BJ (cell line): ENCODE measurements at regions of chr12 and their contacts with region 1.

Region 1: GRCh38 chr12:52980693-52981423 is 25.4 kb upstream of the EIF4B start:
- DNase-seq: peak; percentile 51
- H3K4me3 ChIP-seq: no peak overlapping the region
- H3K27me3 ChIP-seq: no peaks in the 10 kb centered on the region
- CTCF ChIP-seq: peak; percentile 95

Region 2: DNA sequence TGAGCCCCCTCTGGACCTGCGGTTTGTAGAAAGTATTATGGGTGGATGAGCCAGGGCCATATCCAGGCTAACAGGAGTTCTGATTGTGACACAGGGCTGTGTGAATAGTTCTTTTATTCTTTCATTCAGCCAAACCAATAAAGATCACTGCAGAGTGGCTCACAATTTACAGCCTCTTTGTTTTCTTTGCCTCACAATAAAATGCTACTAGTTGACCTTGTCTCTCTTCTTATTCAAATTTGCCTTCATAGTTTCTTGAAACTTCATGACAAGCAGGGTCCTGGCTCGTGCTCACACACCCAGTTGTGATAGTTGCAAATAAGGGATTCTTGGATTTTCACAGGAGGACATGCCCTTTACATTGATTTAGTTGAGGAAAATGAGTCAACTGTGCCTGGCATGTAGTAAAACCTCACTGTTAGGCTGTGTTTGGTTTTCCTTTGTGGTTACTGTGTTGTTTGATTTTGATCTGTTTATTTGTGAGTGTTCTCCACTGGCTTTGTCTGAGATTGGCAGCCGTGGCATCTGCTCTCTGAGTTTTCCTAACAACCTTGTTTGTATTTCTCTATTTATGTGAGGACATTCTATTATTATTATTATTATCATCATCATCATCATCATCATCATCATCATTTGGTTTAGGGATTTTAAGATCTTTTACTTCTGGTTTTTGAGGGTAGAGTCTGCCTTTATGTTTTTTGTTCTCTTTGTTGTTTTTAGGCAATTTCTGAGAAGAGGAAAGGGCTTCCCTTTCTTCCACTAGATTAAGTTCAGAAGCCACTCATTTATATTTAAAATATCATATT is 526.2 kb before region 1 on chr12:
- CTCF ChIA-PET with region 1: no interaction called
- POLR2A ChIA-PET with region 1: no interaction called
- DNase-seq: no peak
- H3K4me3 ChIP-seq: no peak overlapping the region
- H3K27me3 ChIP-seq: no peaks in the 10 kb centered on the region
- CTCF ChIP-seq: no peak

Region 3: DNA sequence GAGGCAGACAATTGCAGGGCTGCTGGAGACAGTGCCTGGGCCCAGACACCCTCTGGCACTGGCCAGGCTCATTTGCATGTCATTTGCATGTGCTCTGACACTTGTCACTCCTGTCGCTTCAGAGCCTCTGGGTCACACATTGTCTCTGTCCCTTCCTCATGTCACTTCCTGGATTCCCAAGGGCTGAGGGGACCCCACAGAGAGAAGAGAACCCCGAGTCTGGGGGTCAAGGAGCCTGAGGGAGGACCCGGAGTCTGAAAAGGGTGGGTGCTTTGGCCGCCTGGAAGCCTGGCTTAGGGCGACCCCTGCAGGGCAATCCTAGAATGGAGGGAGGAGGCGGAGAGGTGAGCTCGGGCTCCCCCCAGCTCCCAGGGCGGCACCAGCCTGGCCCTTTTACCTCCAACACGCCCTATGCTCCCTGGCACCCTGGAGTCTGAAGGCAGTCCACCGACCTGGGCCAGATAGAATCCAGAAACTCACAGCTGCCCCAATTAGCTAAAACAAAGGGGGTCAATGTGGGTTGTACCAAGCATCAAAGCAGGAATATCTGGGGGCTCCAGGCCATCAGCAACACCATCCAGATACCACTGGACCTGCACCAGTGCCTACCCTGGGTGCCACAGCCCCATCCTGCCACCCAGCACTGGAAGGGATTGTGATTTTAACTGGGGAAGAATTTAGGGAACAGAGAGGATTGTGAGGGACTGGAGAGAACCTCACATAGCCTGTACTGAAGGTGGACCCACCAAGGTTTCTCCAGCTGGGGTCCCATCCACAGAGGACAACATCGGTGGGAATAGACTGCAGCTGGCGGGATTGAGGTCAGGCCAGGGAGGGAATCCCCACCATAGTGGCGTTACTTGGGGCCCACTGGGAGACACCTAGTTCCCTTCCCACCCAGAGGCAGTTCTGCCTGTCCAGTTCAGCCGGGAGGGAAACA is 110.2 kb before region 1 on chr12:
- CTCF ChIA-PET with region 1: interaction called, 30 read pairs
- POLR2A ChIA-PET with region 1: no interaction called
- DNase-seq: no peak
- H3K4me3 ChIP-seq: no peak overlapping the region
- H3K27me3 ChIP-seq: no peaks in the 10 kb centered on the region
- CTCF ChIP-seq: peak; percentile 75

Region 4: GRCh38 chr12:52903285-52903854 is 77.5 kb before region 1 on chr12:
- CTCF ChIA-PET with region 1: interaction called, 39 read pairs
- POLR2A ChIA-PET with region 1: no interaction called
- DNase-seq: no peak
- H3K4me3 ChIP-seq: peak overlapping the region; percentile 14
- H3K27me3 ChIP-seq: no peaks in the 10 kb centered on the region
- CTCF ChIP-seq: no peak

Region 5: DNA sequence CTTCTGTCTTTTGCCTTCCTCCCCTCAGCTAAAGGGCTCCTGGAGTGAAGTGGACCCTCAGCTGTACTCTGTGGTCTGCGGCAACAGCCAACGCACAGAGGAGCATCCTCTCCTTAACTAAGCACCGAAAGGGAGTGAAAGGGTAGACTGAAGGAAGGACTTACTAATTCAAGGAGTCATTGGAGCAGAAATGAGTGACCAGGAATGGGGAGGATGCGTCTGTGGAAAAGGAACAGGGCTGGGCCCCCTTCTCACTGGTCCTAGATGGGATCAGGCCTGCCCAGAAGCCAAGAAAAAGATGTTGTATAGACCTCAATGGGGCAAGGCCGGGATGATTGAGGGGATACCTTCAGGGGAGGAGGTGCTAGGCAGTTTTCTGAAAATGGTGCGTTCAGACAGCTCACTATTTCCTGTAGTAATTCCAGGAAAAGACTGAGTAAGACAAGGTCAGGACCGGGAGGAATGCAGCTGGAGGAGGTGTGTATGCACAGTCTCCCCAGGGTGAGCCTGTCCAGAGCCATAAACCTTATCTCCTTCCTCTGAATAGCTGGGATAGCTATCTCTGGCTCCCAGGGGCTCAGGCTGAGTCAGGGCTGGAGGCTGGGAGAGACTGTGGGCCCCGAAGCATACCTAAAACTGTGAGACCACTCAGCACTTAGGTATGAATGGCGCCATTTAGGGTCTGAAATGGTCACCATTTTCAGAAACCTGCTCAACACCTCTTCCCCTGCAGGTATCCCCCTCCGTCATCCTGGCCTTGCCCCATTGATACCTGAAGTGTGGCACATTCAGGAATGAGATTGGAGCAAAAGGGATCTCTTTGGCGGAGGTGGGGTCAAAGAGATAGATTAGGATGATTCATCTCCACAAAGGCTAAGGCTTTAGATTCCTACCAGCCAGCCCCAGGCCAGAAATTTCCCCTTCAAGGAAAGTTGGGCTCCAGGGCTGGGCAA is 55.8 kb before region 1 on chr12:
- CTCF ChIA-PET with region 1: interaction called, 10 read pairs
- POLR2A ChIA-PET with region 1: no interaction called
- DNase-seq: peak; percentile 51
- H3K4me3 ChIP-seq: no peak overlapping the region
- H3K27me3 ChIP-seq: no peaks in the 10 kb centered on the region
- CTCF ChIP-seq: no peak

Region 6: GRCh38 chr12:52969828-52970569 is 10.9 kb before region 1 on chr12:
- CTCF ChIA-PET with region 1: interaction called, 33 read pairs
- POLR2A ChIA-PET with region 1: no interaction called
- DNase-seq: no peak
- H3K4me3 ChIP-seq: no peak overlapping the region
- H3K27me3 ChIP-seq: no peaks in the 10 kb centered on the region
- CTCF ChIP-seq: no peak

Region 7: DNA sequence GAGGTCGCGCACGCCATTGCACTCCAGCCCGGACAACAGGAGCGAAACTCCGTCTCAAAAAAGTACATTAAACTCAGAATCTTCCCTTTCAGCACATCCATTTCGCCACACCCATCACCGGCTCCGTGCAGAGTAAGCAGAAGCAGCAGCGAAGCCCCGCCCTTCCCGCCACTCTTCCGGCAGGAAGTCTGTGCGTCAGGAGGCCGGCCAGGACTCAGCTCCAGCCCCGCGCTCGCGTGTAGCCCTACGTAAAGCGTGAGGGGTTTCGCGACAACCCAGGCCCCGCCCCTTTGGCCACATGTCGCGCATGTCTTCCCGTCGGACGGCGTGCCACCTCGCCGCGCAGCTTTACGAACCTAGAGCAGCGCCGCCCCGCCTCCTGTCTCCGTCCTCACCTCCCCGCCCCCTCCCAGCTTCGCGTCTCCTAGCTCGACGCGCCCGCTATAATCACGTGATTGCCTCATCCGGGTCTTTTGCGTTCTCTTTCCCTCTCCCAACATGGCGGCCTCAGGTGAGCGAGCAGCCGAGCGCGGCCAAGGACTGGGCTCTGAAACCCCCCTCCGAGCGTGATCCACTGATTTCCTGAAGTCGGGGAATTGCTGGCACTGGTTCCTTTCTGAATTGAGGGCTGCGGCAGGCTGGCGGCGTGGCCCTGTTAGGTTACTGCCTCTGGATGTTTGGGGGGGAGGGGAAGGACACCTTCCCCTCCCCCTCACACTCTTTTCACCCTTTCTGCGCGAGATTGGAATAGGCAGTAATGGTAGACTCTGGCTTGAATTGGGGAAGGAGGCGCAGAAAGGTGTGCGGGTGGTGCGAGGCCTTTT is 25.3 kb after region 1 on chr12 and contains the start of gene EIF4B:
- CTCF ChIA-PET with region 1: interaction called, 11 read pairs
- POLR2A ChIA-PET with region 1: no interaction called
- DNase-seq: peak; percentile 97
- H3K4me3 ChIP-seq: peak within 1 kb of the TSS; percentile 99
- H3K27me3 ChIP-seq: no peaks in the 10 kb centered on the region
- CTCF ChIP-seq: no peak
- polyA plus RNA-seq, gene EIF4B: 296 and 496 TPM in 2 replicates

Region 8: DNA sequence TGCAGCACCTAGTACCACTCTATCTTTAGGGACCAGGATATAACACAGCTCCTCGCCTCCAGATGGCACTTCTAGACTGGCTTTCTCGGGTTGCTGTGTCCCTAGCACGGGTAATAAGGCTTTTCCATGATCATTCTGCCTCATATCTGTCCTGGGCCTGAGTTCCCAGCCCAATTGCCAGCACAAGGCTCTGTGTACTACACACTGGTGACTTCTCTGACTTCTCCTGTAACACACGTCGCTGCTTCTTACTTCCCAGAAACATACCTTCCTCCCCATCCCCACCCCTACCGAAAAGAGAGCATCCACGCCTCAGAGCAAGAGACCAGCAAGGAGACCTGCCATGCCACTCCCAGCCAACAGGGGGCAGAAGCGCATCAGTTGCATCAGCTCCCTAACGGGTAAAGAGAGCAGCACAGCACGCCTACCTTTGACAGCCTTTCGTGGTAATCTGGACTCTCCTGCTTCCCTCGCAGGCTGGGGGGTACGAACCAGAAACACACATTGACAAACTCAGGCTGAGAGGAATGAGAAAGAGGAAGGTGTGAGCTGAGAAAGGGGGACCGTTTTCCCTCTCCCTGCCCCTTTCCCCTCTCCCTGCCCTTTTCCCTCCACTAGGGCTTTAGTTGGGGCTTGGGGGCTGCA is 178.5 kb after region 1 on chr12:
- CTCF ChIA-PET with region 1: no interaction called
- POLR2A ChIA-PET with region 1: no interaction called
- DNase-seq: no peak
- H3K4me3 ChIP-seq: no peak overlapping the region
- H3K27me3 ChIP-seq: no peaks in the 10 kb centered on the region
- CTCF ChIP-seq: peak; percentile 100

Region 9: GRCh38 chr12:53220801-53221202 is 239.9 kb after region 1 on chr12:
- CTCF ChIA-PET with region 1: no interaction called
- POLR2A ChIA-PET with region 1: no interaction called
- DNase-seq: peak; percentile 69
- H3K4me3 ChIP-seq: peak overlapping the region; percentile 51
- H3K27me3 ChIP-seq: no peaks in the 10 kb centered on the region
- CTCF ChIP-seq: no peak